Activated naive CD4-positive, alpha-beta T cell treated with anti-CD3 and anti-CD28 coated beads for 36 hours (primary cell): ENCODE measurements at regions of chr1 and their contacts with region 1.

Region 1: DNA sequence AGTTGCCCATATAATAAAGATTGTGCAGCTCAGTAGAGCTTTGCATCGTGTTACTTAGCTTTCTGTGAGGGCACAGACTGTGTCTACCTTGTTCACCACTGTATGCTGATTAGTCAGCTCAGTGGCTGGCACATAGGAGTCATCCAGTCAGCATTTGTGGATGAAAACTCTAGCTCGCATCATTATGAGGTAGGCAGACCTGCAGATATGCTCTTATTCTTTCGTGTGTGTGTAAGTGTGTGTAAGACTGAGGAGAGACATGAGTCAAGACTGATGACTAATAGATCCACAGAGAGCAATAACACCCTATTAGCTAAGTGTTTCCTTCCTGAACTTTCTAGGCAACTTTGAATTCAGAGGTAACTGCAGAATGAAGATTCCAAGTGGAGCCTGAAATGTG is 17.1 kb downstream of the TTF2 start:
- DNase-seq: peak; percentile 79
- H3K4me3 Mint-ChIP-seq: no peak overlapping the region
- H3K27ac Mint-ChIP-seq: peak overlapping the region; percentile 76
- H3K4me1 Mint-ChIP-seq: peaks cover 38% of the 10 kb centered on the region
- H3K27me3 Mint-ChIP-seq: no peaks in the 10 kb centered on the region

Region 2: DNA sequence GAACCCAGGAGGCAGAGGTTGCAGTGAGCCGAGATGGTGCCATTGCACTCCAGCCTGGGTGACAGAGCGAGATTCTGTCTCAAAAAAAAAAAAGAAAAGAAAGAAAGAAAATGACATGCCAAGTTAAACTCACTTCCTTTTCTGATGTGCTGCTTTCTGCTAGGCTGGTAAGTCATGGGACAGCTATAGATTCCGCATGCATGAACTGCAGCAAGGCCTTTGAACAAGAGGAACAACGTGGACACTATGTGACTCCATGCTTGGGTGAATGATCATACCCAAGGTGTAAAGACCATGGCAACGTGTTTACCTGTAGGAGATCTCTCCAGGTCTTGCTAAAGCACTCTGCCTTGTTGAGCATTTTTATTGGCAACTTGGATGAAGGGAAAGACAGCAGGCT is 27.4 kb before region 1 on chr1:
- CTCF ChIA-PET with region 1: no interaction called
- intact Hi-C with region 1: no loop called
- DNase-seq: no peak
- H3K4me3 Mint-ChIP-seq: peak overlapping the region; percentile 42
- H3K27ac Mint-ChIP-seq: peak overlapping the region; percentile 68
- H3K4me1 Mint-ChIP-seq: peaks cover 57% of the 10 kb centered on the region
- H3K27me3 Mint-ChIP-seq: no peaks in the 10 kb centered on the region

Region 3: DNA sequence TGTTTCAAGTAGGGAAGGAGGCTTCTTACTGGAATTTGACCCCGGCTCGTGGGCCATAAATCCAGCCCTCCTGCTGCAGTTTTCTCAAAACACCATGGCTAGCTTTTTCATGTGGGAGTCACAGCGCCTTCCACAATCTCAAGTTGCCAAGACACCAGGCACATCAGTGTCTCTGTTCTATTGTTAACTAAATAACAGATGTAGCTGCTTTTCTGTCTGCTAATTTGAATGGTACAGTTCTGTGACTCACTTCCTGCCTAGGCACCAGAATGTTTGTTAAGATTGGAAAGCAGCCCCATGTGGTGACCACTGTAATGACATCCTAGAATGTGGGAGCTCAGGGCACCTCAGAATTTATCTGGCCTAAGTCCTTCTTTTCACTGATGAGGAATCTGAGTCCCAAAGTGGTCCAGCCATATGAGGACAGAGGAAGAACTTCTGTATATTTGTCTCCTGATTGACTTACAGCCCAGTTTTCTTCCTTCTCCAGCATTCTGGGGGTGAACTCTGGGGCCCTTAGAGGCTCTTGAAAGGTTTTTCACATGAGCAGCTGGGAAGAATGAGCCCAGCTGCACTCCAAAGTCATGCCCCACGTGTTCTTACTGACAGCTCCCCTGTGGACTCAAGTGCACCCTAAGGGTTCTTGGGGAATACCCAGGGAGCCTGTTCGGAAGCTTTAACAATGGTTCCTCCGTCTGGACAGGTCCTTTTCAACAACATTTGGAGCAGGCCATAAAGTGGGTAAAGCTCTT is 16.8 kb after region 1 on chr1:
- CTCF ChIA-PET with region 1: interaction called, 20 read pairs
- intact Hi-C with region 1: loop called (anchors 1 kb)
- DNase-seq: peak; percentile 68
- H3K4me3 Mint-ChIP-seq: no peak overlapping the region
- H3K27ac Mint-ChIP-seq: no peak overlapping the region
- H3K4me1 Mint-ChIP-seq: peaks cover 20% of the 10 kb centered on the region
- H3K27me3 Mint-ChIP-seq: no peaks in the 10 kb centered on the region

Region 4: GRCh38 chr1:117367047-117368018 is 290.1 kb after region 1 on chr1 and contains the start of gene MAN1A2:
- CTCF ChIA-PET with region 1: no interaction called
- intact Hi-C with region 1: loop called (anchors 5 kb)
- DNase-seq: peak; percentile 76
- H3K4me3 Mint-ChIP-seq: peak within 1 kb of the TSS; percentile 94
- H3K27ac Mint-ChIP-seq: peak within 1 kb of the TSS; percentile 94
- H3K4me1 Mint-ChIP-seq: peaks cover 48% of the 10 kb centered on the region
- H3K27me3 Mint-ChIP-seq: no peaks in the 10 kb centered on the region
- total RNA-seq, gene MAN1A2: 14.6 to 17.4 TPM

Region 5: DNA sequence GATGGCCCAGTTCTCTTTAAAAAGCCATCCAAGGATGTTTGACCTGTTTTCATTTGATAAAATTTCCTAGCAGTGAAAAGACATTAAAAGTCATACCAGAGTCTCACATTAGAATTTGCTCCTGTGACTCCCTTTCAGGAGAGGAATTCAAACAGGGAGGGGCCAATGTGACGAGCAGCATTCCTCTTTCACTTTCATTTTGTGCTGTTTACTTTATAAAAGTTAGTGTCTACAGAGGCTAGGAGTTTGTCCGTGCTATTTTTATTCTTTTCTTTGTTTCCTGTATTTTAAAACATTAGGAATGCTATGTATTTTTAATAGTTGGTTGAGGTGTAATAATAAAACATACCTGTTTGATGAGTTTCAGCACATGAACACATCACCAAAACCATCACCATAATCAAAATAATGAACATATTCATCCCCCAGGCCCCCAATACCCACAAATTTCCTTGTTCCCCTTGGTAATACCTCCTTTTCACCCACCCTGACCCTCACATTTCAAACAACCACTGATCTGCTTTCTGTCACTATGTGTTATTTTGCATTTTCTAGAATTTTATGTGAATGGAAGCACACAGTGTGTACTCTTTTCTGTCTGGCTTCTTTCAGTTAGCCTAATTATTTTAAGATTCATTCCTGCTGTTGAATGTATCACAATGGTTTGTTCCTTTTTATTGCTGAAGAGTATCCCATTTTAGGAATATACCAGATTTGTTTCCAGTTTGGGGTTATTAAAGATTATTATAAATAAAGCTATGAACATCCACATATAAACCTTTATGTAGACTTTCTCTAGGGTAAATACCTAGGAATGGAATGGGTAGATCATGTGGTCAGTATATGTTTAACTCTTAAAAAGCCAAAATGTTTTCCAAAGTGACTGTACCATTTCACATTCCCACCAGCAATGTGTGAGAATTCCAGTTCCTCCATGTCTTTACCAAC is 658.1 kb after region 1 on chr1:
- CTCF ChIA-PET with region 1: no interaction called
- intact Hi-C with region 1: loop called (anchors 5 kb)
- DNase-seq: peak; percentile 58
- H3K4me3 Mint-ChIP-seq: peak overlapping the region; percentile 64
- H3K27ac Mint-ChIP-seq: peak overlapping the region; percentile 81
- H3K4me1 Mint-ChIP-seq: peaks cover 11% of the 10 kb centered on the region
- H3K27me3 Mint-ChIP-seq: no peaks in the 10 kb centered on the region